Colonic mucosa (tissue), 4 donors: ENCODE measurements at regions of chr4 and their contacts with region 1.

Region 1: GRCh38 chr4:15956179-15956850 is 6.7 kb downstream of the FGFBP2 start:
- DNase-seq: peak; percentile 95
- H3K4me3 ChIP-seq: no peak overlapping the region
- H3K27ac ChIP-seq: no peak overlapping the region
- H3K4me1 ChIP-seq: no peaks in the 10 kb centered on the region
- H3K27me3 ChIP-seq: no peaks in the 10 kb centered on the region
- CTCF ChIP-seq: peak; percentile 93

Region 2: DNA sequence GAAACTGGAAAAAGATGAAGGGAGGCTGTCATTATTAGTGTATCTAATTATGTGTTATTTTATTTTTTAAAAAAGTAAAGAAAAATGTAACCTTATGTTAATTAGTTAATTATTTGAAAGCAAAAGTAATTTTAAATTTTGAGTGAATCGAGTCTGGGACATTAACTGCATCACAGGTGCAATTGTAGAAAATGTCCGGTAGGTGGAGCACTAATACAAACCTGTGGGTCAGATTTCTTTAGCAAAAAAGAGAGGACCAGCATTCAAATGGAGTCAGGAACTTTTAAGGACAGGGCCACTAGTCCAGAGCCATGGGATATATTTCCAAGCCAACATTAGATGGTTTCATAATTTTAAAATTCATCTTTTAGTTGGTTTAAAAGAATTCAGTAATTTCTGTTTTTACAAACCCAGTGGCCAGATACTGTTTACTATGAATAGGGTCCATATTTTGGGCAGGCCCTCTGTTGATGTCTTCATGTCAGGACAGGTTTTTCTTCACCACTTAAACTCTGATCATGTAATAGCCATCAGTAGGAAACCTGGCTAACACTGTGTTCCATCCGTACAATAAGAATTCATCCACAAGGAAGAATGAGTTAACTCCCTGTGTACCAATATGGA is 226.3 kb before region 1 on chr4:
- intact Hi-C with region 1: loop called (anchors 10 kb)
- DNase-seq: peak; percentile 26
- H3K4me3 ChIP-seq: no peak overlapping the region
- H3K27ac ChIP-seq: no peak overlapping the region
- H3K4me1 ChIP-seq: no peaks in the 10 kb centered on the region
- H3K27me3 ChIP-seq: no peaks in the 10 kb centered on the region
- CTCF ChIP-seq: peak; percentile 95

Region 3: GRCh38 chr4:15805583-15806517 is 150.5 kb before region 1 on chr4:
- intact Hi-C with region 1: loop called (anchors 5 kb)
- DNase-seq: peak; percentile 51
- H3K4me3 ChIP-seq: no peak overlapping the region
- H3K27ac ChIP-seq: no peak overlapping the region
- H3K4me1 ChIP-seq: no peaks in the 10 kb centered on the region
- H3K27me3 ChIP-seq: no peaks in the 10 kb centered on the region
- CTCF ChIP-seq: peak; percentile 55

Region 4: DNA sequence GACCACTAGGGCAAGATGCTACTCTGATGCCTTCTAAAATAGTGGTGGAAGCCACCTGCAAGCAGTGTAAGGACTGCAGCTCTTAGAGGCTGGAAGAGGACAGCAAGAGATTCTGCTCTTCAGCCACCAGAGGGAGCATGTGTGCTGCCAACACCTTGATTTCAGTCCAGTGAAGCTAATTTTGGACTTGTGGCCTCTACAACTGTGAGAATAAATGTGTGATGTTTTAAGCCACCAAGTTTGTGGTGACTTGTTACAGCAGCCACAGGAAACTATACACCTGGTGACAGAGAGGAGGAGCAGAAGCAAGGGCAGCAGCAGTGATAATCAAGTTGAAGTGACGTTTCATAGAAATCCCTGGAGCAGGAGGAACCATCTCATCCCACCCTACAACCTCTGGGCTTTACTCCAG is 73.6 kb before region 1 on chr4:
- intact Hi-C with region 1: loop called (anchors 2 kb)
- DNase-seq: peak; percentile 58
- H3K4me3 ChIP-seq: no peak overlapping the region
- H3K27ac ChIP-seq: no peak overlapping the region
- H3K4me1 ChIP-seq: no peaks in the 10 kb centered on the region
- H3K27me3 ChIP-seq: no peaks in the 10 kb centered on the region
- CTCF ChIP-seq: peak; percentile 93